ENCODE measurements at regions of chr19 and their contacts with region 1.

Region 1: DNA sequence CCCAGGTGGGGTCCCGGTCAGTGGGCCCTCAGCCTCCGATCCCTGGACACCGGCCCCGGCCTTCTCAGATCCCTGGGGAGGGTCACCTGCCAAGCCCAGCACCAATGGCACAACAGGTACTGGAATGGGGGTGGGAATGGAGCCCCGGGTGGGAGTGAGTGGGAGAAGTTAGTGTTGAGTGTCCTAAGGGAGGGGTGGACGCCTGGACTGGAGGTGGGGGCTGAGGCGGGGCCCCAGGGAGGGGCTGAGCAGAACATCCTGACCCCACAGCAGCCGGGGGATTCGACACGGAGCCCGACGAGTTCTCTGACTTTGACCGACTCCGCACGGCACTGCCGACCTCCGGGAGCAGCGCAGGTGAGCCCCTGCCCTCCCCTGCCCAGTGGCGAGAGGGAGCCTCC is 17.7 kb downstream of the EPN1 start:
- DNase-seq: no peak
- H3K4me3 ChIP-seq: no peak overlapping the region
- H3K27ac ChIP-seq: no peak overlapping the region
- H3K4me1 ChIP-seq: no peaks in the 10 kb centered on the region
- H3K27me3 ChIP-seq: no peaks in the 10 kb centered on the region; a peak in 1 of 7 replicates
- CTCF ChIP-seq: no peak
- EP300 ChIP-seq: no peak
- POLR2A ChIP-seq: no peak
- RAD21 ChIP-seq: no peak

Region 2: DNA sequence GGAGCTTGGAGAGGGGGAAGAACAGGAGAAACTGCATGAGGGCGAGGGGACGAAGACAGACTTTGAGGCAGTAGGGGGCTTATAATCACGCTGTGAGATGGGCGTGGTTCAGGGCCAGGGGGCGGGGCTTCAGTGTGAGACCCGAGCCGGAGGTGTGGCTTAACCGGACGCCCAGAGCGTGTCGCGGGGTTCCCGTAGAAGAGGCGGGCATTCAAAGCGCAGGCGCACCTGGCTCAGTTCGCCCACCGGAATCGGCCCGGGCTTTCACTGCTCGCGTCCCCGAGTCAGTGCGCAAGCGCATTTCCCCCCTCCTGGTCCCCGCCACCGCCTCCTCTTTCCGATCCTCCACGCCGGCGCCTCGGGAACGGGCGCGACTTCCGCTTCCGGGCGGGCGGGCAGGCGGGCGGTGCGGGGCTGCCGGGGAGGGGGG is 87.5 kb before region 1 on chr19:
- CTCF ChIA-PET with region 1: no interaction called
- POLR2A ChIA-PET with region 1: no interaction called
- DNase-seq: peak; percentile 94 to 98
- H3K4me3 ChIP-seq: peak overlapping the region; percentile 54 to 93 (median 68)
- H3K27ac ChIP-seq: peak overlapping the region; percentile 64; the same call in 1 of the 2 replicates
- H3K4me1 ChIP-seq: peaks cover 0 to 14% (median 10%) of the 10 kb centered on the region in 4 experiments; a peak in 6 of 7 replicates
- H3K27me3 ChIP-seq: no peaks in the 10 kb centered on the region
- CTCF ChIP-seq: no peak
- EP300 ChIP-seq: no peak
- POLR2A ChIP-seq: peak; percentile 49 to 71
- RAD21 ChIP-seq: no peak

Region 3: DNA sequence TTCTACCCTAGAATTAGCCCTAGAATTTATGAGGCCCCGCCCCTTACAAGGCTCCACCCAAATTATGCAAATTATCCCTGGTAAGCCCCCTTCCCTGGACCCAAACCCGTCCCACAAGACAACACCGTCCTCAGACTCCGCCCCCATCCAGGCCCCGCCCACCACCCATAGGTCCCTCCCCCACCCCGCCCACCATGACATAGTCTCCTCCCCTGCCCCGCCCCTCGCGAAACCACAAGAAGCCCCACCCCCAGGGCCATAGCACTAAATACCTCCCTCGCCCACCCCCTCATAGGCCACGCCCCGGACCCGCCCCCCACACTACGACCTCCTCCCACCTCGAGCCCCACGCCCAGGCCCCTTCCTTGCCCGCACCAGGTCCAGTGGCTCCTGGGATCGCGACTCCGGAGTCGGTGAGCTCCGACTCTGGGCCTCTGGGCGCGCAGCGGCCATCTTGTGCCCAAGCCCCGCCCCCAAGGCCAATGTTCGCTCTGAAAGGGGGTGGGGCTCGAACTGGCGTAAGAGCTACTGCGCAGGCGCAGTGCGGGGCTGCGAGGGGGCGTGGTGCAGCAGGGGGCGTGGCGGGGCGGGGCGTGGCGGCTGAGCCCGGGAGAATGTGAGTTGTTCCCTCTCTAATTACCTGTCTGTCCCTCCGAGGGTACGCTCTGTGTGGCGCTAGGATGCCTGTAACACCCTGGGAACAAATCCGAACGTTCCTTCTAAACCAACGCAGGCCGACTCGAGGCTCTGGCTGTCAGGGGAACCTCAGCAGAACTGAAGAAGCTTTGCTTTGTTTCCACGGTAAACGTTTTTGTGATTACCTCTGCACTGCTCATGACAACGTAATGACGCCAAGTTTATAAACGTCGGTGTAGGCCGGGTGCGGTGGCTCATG is 68.3 kb before region 1 on chr19 and contains the start of gene ZNF784:
- CTCF ChIA-PET with region 1: no interaction called
- POLR2A ChIA-PET with region 1: no interaction called
- DNase-seq: peak; percentile 87 to 95
- H3K4me3 ChIP-seq: peak within 1 kb of the TSS; percentile 48 to 95 (median 70)
- H3K27ac ChIP-seq: peak within 1 kb of the TSS; percentile 84; the same call in 1 of the 2 replicates
- H3K4me1 ChIP-seq: peaks cover 0 to 3% (median 0%) of the 10 kb centered on the region in 4 experiments; a peak in 3 of 7 replicates
- H3K27me3 ChIP-seq: no peaks in the 10 kb centered on the region
- CTCF ChIP-seq: no peak
- EP300 ChIP-seq: no peak
- POLR2A ChIP-seq: peak; percentile 62 to 86
- RAD21 ChIP-seq: no peak
- total RNA-seq, gene ZNF784: 8.0 and 8.6 TPM in 2 replicates

Region 4: GRCh38 chr19:55703790-55704215 is 11.1 kb after region 1 on chr19:
- CTCF ChIA-PET with region 1: interaction called, 12 read pairs
- POLR2A ChIA-PET with region 1: interaction called, 6 read pairs
- DNase-seq: peak; percentile 39 to 92
- H3K4me3 ChIP-seq: no peak overlapping the region
- H3K27ac ChIP-seq: no peak overlapping the region
- H3K4me1 ChIP-seq: no peaks in the 10 kb centered on the region; a peak in 1 of 7 replicates
- H3K27me3 ChIP-seq: no peaks in the 10 kb centered on the region
- CTCF ChIP-seq: peak; percentile 76 to 93 (median 91)
- EP300 ChIP-seq: no peak
- POLR2A ChIP-seq: no peak
- RAD21 ChIP-seq: peak; percentile 50 to 56; a peak in 3 of 4 replicates